Activated T-helper 1 cell treated with anti-CD3 and anti-CD28 coated beads, Interleukin-12 subunit alpha, Interleukin-12 subunit beta, Interleukin-2, Interleukin-4 antibody, amounts not matched to agents 30 ng/mL and 10 ng/mL and 1 ng/mL, durations not matched to agents 14 hours and 24 hours and 36 hours (primary cell): ENCODE measurements at regions of chr11 and their contacts with region 1.

Region 1: DNA sequence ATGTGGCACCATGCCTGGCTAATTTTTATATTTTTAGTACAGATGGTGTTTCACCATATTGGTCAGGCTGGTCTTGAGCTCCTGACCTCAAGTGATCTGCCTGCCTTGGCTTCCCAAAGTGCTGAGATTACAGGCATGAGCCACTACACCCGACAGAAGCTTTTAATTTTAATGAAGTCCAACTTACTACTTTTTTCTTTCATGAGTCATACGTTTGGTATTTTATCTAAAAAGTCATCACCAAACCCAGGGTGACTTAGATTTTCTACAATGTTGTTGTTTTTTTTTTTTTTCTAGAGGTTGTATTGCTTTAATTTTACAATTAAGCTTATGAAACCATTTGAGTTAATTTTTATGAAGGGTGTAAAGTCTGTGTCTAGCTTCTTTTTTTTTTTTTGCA is 34.9 kb downstream of the JRKL start:
- DNase-seq: no peak
- H3K4me3 Mint-ChIP-seq: no peak overlapping the region
- H3K27ac Mint-ChIP-seq: no peak overlapping the region
- H3K4me1 Mint-ChIP-seq: peaks cover 6% of the 10 kb centered on the region
- H3K27me3 Mint-ChIP-seq: peaks cover 46% of the 10 kb centered on the region

Region 2: DNA sequence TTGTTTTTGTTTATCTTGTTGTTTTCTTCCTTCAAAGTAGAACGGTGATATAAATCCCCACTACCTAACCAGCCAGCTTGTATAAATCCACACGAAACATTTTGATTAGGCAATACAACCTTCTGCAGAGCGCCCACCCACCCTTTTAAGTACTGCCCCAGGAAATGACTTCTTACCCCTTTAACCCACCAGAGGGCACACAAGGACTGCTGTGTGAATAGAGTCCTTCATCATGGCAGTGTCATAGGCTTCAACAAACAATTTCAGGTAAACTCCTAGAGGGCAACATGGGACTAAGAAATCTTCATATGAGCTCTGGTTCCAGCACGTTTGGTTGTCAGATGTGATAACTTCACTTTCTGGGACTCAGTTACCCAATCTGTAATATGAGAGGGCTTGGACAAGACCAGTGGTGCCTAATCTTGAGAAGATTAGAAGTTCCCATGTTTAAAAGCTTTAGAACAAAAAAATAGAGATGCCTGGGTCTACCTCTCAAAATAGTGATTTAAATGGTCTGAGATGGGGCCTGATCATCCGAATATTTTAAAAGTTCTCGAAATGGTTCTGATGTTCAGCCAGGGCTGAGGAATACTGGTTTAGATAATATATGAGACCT is 1801.5 kb before region 1 on chr11:
- intact Hi-C with region 1: loop called (anchors 2 kb)
- DNase-seq: peak; percentile 27
- H3K4me3 Mint-ChIP-seq: no peak overlapping the region
- H3K27ac Mint-ChIP-seq: no peak overlapping the region
- H3K4me1 Mint-ChIP-seq: no peaks in the 10 kb centered on the region
- H3K27me3 Mint-ChIP-seq: peaks cover 7% of the 10 kb centered on the region

Region 3: GRCh38 chr11:95705485-95706124 is 719.1 kb before region 1 on chr11:
- intact Hi-C with region 1: loop called (anchors 10 kb)
- DNase-seq: peak; percentile 77
- H3K4me3 Mint-ChIP-seq: no peak overlapping the region
- H3K27ac Mint-ChIP-seq: no peak overlapping the region
- H3K4me1 Mint-ChIP-seq: peaks cover 17% of the 10 kb centered on the region
- H3K27me3 Mint-ChIP-seq: peaks cover 3% of the 10 kb centered on the region

Region 4: DNA sequence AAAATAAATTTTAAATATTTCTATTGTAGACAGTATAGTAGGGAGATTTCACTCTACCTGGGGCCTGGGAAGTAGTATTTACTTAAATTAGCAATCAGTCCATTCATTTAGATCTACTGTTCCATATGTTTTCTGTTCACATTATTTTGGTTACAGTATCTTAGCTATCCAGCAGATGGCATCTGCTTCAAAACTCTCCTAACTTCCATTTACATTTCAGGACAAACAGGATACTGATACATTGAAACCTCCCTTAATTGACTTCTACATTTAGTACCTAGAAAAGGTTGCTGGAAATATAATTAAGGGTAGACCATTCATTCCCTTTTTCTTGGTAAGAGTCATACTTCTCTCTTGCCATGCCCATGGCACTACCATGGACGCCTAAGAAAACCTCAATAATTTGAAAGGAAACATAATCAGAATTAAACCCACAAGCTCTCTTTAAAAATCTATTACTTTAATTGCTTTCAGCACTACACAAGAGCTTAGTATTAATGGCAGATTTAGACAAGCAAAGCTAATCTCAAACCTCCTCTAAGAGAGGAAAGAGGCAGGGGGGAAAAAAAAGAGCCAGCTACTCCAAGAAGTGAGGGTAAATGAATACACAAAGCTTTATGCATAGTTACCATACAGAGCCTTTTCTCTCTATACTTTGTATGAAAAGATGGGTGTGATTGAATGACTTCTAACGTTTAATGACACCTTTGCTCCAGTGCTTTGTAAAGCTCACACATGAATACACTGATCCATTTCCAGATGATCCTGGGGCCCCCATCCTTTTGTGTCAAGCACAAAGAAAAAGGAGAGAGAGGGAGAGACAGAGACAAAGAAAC is 369.6 kb before region 1 on chr11:
- intact Hi-C with region 1: loop called (anchors 10 kb)
- DNase-seq: no peak
- H3K4me3 Mint-ChIP-seq: no peak overlapping the region
- H3K27ac Mint-ChIP-seq: no peak overlapping the region
- H3K4me1 Mint-ChIP-seq: peaks cover 60% of the 10 kb centered on the region
- H3K27me3 Mint-ChIP-seq: no peaks in the 10 kb centered on the region

Region 5: DNA sequence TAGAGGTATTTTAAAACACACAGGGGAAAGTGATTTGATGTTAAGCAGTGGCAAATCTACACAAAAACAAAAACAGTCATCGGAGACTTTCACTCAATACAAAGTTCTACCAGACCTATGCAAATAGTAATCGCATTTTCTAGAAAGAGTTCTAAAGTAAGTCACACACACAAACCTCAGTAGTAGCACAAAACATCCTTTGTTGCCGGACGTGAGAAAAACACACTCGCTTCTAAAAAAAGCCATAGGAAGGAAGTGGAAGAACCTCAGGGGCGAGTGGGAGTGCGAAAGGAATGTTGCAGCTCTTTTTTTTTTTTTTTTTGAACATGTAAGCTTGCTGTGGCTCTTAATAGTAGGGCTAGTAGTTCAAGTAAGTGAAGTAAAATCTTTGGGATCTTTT is 170.6 kb before region 1 on chr11:
- intact Hi-C with region 1: no loop called
- DNase-seq: peak; percentile 30
- H3K4me3 Mint-ChIP-seq: peak overlapping the region; percentile 77
- H3K27ac Mint-ChIP-seq: peak overlapping the region; percentile 92
- H3K4me1 Mint-ChIP-seq: peaks cover 75% of the 10 kb centered on the region
- H3K27me3 Mint-ChIP-seq: no peaks in the 10 kb centered on the region